Activated T-helper 2 cell treated with anti-CD3 and anti-CD28 coated beads, Interferon-gamma antibody, Interleukin-2, Interleukin-4, amounts not matched to agents 10 μg/mL and 5 μg/mL and 100 μg/mL, durations not matched to agents 14 hours and 24 hours and 36 hours (primary cell): ENCODE measurements at regions of chr1 and their contacts with region 1.

Region 1: GRCh38 chr1:109397538-109398342 is at the start of gene SORT1:
- DNase-seq: peak; percentile 44
- H3K4me3 Mint-ChIP-seq: peak within 1 kb of the TSS; percentile 80
- H3K27ac Mint-ChIP-seq: no peak within 1 kb of the TSS
- H3K4me1 Mint-ChIP-seq: peaks cover 15% of the 10 kb centered on the region
- H3K27me3 Mint-ChIP-seq: peaks cover 40% of the 10 kb centered on the region
- total RNA-seq, gene SORT1: 1.1 and 1.9 TPM in 2 replicates

Region 2: GRCh38 chr1:109213785-109214468 is 183.8 kb before region 1 on chr1 and contains the start of gene SARS1:
- intact Hi-C with region 1: loop called (anchors 5 kb)
- DNase-seq: peak; percentile 86
- H3K4me3 Mint-ChIP-seq: peak within 1 kb of the TSS; percentile 98
- H3K27ac Mint-ChIP-seq: peak within 1 kb of the TSS; percentile 89
- H3K4me1 Mint-ChIP-seq: peaks cover 28% of the 10 kb centered on the region
- H3K27me3 Mint-ChIP-seq: peaks cover 3% of the 10 kb centered on the region
- total RNA-seq, gene SARS1: 128 and 129 TPM in 2 replicates

Region 3: GRCh38 chr1:109263597-109264398 is 133.9 kb before region 1 on chr1:
- intact Hi-C with region 1: loop called (anchors 1 kb)
- DNase-seq: peak; percentile 74
- H3K4me3 Mint-ChIP-seq: no peak overlapping the region
- H3K27ac Mint-ChIP-seq: no peak overlapping the region
- H3K4me1 Mint-ChIP-seq: no peaks in the 10 kb centered on the region
- H3K27me3 Mint-ChIP-seq: no peaks in the 10 kb centered on the region

Region 4: DNA sequence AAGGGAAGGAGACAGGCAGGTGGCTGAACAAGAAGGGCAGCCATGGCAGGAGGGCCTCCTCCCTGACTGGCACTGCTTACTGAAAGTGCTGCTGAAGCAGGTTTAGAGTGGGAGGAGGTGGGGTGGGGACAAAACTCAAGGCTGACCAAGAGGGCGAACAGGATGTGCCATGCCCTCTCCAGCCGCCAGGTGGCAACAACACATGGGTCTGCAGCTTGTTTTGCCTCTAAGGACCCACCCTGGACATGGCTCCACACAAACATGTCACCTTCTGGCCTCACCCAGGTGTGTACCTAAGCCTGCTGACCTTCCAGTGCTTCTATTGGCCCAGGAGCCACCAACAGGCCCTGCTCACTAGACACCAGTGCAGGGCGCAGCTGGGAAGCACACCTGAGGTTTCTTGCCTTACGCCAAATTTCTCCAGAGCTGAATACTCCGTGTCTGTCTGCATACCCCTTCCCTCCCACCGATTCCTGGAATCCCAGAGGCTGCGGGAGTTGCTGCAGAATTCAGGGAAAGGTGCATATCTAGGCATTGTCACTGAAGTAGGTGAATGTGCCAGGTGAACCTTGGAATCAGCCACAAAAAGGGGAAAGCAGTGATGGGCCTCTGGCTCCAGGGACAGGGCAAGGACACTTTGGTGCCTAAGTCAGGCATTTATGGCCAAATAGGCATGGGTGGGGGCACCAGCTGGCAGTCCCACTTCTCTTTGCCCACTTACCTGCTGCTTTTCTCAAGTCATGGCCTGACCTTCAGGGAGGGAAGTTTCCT is 120.1 kb before region 1 on chr1:
- intact Hi-C with region 1: loop called (anchors 1 kb)
- DNase-seq: peak; percentile 52
- H3K4me3 Mint-ChIP-seq: no peak overlapping the region
- H3K27ac Mint-ChIP-seq: peak overlapping the region; percentile 46
- H3K4me1 Mint-ChIP-seq: peaks cover 19% of the 10 kb centered on the region
- H3K27me3 Mint-ChIP-seq: no peaks in the 10 kb centered on the region